K562 (cell line): ENCODE measurements at regions of chr9 and their contacts with region 1.

Region 1: GRCh38 chr9:99019790-99020331 is 76.2 kb downstream of the COL15A1 start:
- DNase-seq: no peak
- ATAC-seq: no peak; the same call in 2 of the 3 replicates
- H3K4me3 ChIP-seq: no peak overlapping the region
- H3K27ac ChIP-seq: no peak overlapping the region
- H3K4me1 ChIP-seq: peaks cover 3 to 11% of the 10 kb centered on the region in 2 experiments; a peak in 4 of 5 replicates
- H3K27me3 ChIP-seq: no peaks in the 10 kb centered on the region
- CTCF ChIP-seq: no peak
- EP300 ChIP-seq: no peak
- POLR2A ChIP-seq: no peak
- RAD21 ChIP-seq: no peak

Region 2: GRCh38 chr9:99044827-99045226 is 25.0 kb after region 1 on chr9:
- CTCF ChIA-PET with region 1: no interaction called
- POLR2A ChIA-PET with region 1: no interaction called
- in situ Hi-C with region 1: no loop called
- intact Hi-C with region 1: no loop called
- DNase-seq: no peak
- ATAC-seq: no peak
- H3K4me3 ChIP-seq: no peak overlapping the region
- H3K27ac ChIP-seq: no peak overlapping the region
- H3K4me1 ChIP-seq: peaks cover 5 to 6% of the 10 kb centered on the region in 2 experiments; a peak in 4 of 5 replicates
- H3K27me3 ChIP-seq: no peaks in the 10 kb centered on the region
- CTCF ChIP-seq: no peak
- EP300 ChIP-seq: no peak
- POLR2A ChIP-seq: no peak
- RAD21 ChIP-seq: no peak

Region 3: DNA sequence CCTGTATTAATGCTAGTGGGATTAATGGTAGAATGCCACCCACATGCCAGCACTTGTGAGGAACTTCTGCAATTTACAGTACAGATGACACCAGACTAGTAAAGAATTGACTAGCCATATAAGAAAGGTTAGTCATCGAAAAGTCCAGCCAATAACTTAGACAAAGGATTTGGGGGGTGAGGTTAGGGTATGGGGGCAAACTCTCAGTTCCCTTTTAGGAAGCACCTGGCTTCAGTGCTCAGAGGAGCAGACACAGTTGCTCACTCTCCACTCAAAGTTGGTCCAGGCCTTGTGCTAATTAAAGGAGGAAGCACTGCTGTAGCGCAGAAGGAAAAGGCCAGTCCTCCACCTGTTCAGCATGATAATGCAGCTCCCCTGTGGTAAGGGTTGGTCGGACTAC is 110.2 kb after region 1 on chr9:
- CTCF ChIA-PET with region 1: no interaction called
- POLR2A ChIA-PET with region 1: no interaction called
- in situ Hi-C with region 1: loop called (anchors 10 kb)
- intact Hi-C with region 1: no loop called
- DNase-seq: no peak
- ATAC-seq: peak; percentile 36; the same call in 2 of the 3 replicates
- H3K4me3 ChIP-seq: no peak overlapping the region
- H3K27ac ChIP-seq: no peak overlapping the region
- H3K4me1 ChIP-seq: peaks cover 0 to 38% of the 10 kb centered on the region in 2 experiments; a peak in 3 of 5 replicates
- H3K27me3 ChIP-seq: no peaks in the 10 kb centered on the region
- CTCF ChIP-seq: no peak
- EP300 ChIP-seq: no peak
- POLR2A ChIP-seq: no peak
- RAD21 ChIP-seq: no peak

Region 4: GRCh38 chr9:99140685-99141314 is 120.9 kb after region 1 on chr9:
- CTCF ChIA-PET with region 1: no interaction called
- POLR2A ChIA-PET with region 1: interaction called, 3 read pairs
- in situ Hi-C with region 1: loop called (anchors 10 kb)
- intact Hi-C with region 1: loop called (anchors 2 kb)
- DNase-seq: peak; percentile 60 to 70 (median 66)
- ATAC-seq: peak; percentile 96
- H3K4me3 ChIP-seq: no peak overlapping the region
- H3K27ac ChIP-seq: no peak overlapping the region
- H3K4me1 ChIP-seq: peaks cover 0 to 15% of the 10 kb centered on the region in 2 experiments; a peak in 3 of 5 replicates
- H3K27me3 ChIP-seq: no peaks in the 10 kb centered on the region
- CTCF ChIP-seq: peak; percentile 85 to 88 (median 86)
- EP300 ChIP-seq: no peak
- POLR2A ChIP-seq: no peak
- RAD21 ChIP-seq: peak; percentile 94 to 97

Region 5: DNA sequence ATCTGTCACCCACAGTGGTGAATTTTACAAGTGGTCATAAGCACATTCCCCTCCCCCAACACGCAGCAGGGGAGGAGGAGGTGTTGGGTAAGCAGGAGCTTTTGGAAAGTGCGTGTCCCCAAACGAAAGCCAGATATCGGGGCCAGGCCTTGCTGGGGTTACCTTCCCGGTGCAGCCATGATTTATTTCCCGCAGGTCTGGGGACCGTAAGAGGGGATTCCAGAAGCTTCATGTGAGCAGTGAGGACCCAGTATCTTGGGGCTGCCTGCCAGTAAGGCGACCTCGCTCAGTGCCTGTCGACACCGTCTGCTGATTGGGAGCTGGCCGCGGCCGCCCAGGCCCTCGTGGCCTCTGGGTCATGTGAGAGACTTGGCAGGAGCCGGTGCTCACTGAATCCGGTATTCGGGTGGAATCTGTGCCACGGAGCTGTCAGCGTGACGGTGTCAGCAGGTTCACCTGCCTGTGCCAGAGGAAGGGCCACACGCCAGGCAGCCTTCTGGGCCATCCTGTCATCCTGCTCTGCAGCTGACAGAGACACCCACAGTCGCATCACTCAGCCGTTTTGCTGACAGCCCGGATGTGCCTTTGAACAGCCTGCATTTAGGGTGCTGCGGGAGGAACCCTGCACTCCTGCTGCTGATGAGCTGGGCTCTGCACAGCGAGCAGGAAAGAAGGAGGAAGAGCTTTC is 239.5 kb after region 1 on chr9:
- CTCF ChIA-PET with region 1: no interaction called
- POLR2A ChIA-PET with region 1: no interaction called
- in situ Hi-C with region 1: no loop called
- intact Hi-C with region 1: no loop called
- DNase-seq: peak; percentile 19 to 52 (median 20)
- ATAC-seq: peak; percentile 81
- H3K4me3 ChIP-seq: no peak overlapping the region
- H3K27ac ChIP-seq: no peak overlapping the region
- H3K4me1 ChIP-seq: peaks cover 8% of the 10 kb centered on the region in 2 experiments; a peak in 3 of 5 replicates
- H3K27me3 ChIP-seq: peaks cover 4 to 10% of the 10 kb centered on the region in 2 experiments; a peak in 2 of 5 replicates
- CTCF ChIP-seq: no peak
- EP300 ChIP-seq: no peak
- POLR2A ChIP-seq: no peak
- RAD21 ChIP-seq: no peak